Activated T-helper 1 cell treated with anti-CD3 and anti-CD28 coated beads, Interleukin-12 subunit alpha, Interleukin-12 subunit beta, Interleukin-2, Interleukin-4 antibody, amounts not matched to agents 30 ng/mL and 10 ng/mL and 1 ng/mL, durations not matched to agents 14 hours and 24 hours and 36 hours (primary cell): ENCODE measurements at regions of chr11 and their contacts with region 1.

Region 1: DNA sequence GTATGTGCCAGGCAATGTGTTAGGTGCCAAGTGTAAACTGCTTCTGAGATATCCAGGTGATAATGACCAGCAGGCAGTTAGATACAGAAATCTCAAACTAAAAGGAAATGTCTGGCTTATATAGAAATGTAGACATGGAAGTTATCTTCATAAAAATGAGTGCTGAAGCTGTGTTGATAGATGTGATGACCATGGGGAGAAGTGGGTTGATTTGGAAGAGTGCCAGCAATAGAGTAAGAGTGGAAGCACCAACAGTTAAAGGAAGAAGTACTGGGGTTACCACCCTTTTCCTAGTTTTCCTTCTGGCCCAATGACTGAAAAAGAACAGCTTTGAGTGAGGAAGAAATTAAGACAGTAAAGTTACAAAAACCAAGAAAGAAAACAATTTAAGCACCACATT is 68.5 kb downstream of the C2CD3 start:
- DNase-seq: no peak
- H3K4me3 Mint-ChIP-seq: no peak overlapping the region
- H3K27ac Mint-ChIP-seq: no peak overlapping the region
- H3K4me1 Mint-ChIP-seq: peaks cover 11% of the 10 kb centered on the region
- H3K27me3 Mint-ChIP-seq: no peaks in the 10 kb centered on the region

Region 2: DNA sequence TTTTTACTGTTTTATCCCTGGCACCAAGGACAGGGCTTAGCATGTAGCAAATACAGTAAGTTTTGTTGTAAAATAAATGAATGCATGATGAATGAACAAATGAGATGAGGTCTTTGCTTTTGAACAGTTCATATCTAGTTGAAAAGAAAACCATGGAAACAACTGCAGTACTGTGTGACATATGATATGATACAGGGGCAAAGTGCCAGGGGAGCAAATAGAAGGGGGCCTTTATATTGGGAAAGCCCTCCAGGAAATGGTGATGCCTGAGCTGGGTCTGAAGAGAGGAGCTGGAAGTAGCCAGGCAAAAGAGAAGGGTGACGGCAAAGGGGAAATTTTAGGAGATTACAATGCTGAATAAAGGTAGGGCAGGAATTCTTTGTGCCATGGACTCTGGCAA is 29.6 kb before region 1 on chr11:
- intact Hi-C with region 1: loop called (anchors 2 kb)
- DNase-seq: no peak
- H3K4me3 Mint-ChIP-seq: no peak overlapping the region
- H3K27ac Mint-ChIP-seq: peak overlapping the region; percentile 25
- H3K4me1 Mint-ChIP-seq: peaks cover 14% of the 10 kb centered on the region
- H3K27me3 Mint-ChIP-seq: no peaks in the 10 kb centered on the region